ENCODE measurements at regions of chr7 and their contacts with region 1.

Region 1: GRCh38 chr7:92253251-92253650 is 7.5 kb downstream of the ANKIB1 start:
- DNase-seq: no peak
- ATAC-seq: no peak

Region 2: DNA sequence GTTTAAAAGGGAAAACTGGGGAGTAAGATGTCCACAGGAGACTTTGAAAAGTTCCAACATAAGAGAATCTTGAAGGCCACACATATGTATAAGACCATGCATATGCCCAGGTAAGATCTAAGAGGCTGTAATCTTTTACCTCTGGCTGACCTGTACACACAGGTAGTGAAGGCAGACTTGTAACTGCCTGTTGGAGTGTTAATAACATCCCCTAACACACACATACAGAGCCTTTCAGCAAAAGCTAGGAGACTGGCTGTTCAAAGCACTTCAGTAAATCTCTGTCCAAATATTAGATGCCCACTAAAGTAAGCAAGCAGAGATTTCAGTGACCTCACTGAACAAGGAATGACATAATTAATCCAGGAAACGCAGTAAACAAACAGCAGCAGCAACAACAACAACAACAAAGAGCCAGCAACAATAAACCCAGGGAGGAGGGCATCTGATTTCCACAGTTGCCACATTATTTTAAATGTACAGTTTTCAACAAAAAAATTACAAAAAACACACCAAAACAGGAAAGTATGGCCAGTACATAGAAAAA is 134.0 kb before region 1 on chr7:
- intact Hi-C with region 1: no loop called
- DNase-seq: no peak
- ATAC-seq: no peak

Region 3: GRCh38 chr7:92206019-92206418 is 47.2 kb before region 1 on chr7:
- intact Hi-C with region 1: no loop called
- DNase-seq: no peak
- ATAC-seq: no peak

Region 4: DNA sequence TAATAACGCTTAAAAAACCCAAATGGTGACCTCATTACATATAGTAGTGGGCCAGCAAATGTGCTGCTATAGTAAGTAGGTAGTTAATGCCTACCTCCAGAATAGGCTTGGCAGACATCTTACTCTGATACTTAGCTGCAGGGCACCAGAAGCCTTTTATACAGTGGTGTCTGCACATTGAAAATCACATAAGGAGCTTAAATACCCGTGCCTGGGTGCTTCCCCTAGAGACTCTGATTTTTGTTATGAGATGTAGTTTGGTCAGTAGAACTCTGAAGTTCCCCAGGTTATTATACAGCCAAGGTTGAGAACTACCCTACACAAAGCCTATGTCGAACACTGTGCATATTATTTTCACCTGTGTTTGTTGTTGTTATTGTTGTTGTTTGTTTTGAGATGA is 39.7 kb after region 1 on chr7:
- intact Hi-C with region 1: loop called in 1 of 2 experiments (anchors 5 kb)
- DNase-seq: no peak
- ATAC-seq: no peak

Region 5: GRCh38 chr7:92325858-92326257 is 72.6 kb after region 1 on chr7:
- intact Hi-C with region 1: no loop called
- DNase-seq: no peak
- ATAC-seq: peak in 1 of 2 donors; percentile 68

Region 6: GRCh38 chr7:92391071-92391470 is 137.8 kb after region 1 on chr7:
- intact Hi-C with region 1: no loop called
- DNase-seq: no peak
- ATAC-seq: no peak

Measured in left cardiac atrium (tissue), 4 donors.